GM23248 (cell line): ENCODE measurements at regions of chr1 and their contacts with region 1.

Region 1: GRCh38 chr1:197614916-197615692 is 160.2 kb downstream of the DENND1B start:
- DNase-seq: peak; percentile 71
- H3K4me3 ChIP-seq: no peak overlapping the region
- H3K27ac ChIP-seq: no peak overlapping the region
- H3K4me1 ChIP-seq: no peaks in the 10 kb centered on the region
- H3K27me3 ChIP-seq: no peaks in the 10 kb centered on the region

Region 2: DNA sequence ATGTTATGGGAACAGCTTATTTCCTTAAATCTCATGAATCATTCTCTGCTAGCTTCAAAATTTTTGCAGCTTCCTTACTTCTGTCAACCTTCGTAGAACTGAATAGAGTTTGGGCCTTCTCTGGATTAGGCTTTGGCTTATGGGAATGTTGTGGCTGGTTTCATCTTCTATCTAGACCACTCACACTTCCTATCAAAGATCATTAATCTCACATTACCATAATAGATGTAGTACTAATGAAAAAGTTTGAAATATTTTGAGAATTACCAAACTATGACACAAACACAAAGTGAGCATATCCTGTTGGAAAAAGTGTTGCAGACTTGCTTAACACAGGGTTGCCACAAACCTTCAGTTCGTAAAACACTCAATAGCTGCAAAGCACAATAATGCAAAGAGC is 498.9 kb before region 1 on chr1:
- in situ Hi-C with region 1: no loop called
- DNase-seq: no peak
- H3K4me3 ChIP-seq: no peak overlapping the region
- H3K27ac ChIP-seq: no peak overlapping the region
- H3K4me1 ChIP-seq: no peaks in the 10 kb centered on the region
- H3K27me3 ChIP-seq: no peaks in the 10 kb centered on the region

Region 3: DNA sequence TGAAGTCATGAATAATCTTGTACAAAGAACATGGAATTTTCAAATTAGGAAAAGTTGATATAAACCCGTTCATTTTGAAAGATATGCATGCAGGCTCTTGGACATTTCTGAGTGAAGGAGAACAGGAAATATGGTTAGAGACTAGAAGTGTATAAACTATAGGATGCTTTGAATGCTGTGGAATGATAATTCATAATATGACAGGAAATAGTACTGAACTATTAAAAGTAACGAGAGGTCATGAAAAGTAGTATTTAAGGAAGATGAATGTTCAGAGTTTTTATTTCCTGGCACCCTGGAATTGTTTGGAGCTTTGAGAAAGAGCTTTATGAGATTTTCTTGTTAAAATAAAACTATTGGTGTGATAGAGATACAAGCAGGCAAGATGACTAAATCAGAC is 365.8 kb before region 1 on chr1:
- in situ Hi-C with region 1: no loop called
- DNase-seq: no peak
- H3K4me3 ChIP-seq: no peak overlapping the region
- H3K27ac ChIP-seq: no peak overlapping the region
- H3K4me1 ChIP-seq: no peaks in the 10 kb centered on the region
- H3K27me3 ChIP-seq: no peaks in the 10 kb centered on the region

Region 4: GRCh38 chr1:197868751-197869489 is 253.8 kb after region 1 on chr1:
- in situ Hi-C with region 1: loop called (anchors 10 kb)
- DNase-seq: peak; percentile 79
- H3K4me3 ChIP-seq: no peak overlapping the region
- H3K27ac ChIP-seq: no peak overlapping the region
- H3K4me1 ChIP-seq: no peaks in the 10 kb centered on the region
- H3K27me3 ChIP-seq: no peaks in the 10 kb centered on the region